ENCODE measurements at regions of chr16 and their contacts with region 1.

Region 1: GRCh38 chr16:56700195-56700594 is 17.9 kb downstream of the MT1X start:
- DNase-seq: no peak
- H3K4me3 ChIP-seq: no peak overlapping the region
- H3K27ac ChIP-seq: no peak overlapping the region
- H3K4me1 ChIP-seq: no peaks in the 10 kb centered on the region
- H3K27me3 ChIP-seq: no peaks in the 10 kb centered on the region
- CTCF ChIP-seq: no peak
- POLR2A ChIP-seq: no peak

Region 2: DNA sequence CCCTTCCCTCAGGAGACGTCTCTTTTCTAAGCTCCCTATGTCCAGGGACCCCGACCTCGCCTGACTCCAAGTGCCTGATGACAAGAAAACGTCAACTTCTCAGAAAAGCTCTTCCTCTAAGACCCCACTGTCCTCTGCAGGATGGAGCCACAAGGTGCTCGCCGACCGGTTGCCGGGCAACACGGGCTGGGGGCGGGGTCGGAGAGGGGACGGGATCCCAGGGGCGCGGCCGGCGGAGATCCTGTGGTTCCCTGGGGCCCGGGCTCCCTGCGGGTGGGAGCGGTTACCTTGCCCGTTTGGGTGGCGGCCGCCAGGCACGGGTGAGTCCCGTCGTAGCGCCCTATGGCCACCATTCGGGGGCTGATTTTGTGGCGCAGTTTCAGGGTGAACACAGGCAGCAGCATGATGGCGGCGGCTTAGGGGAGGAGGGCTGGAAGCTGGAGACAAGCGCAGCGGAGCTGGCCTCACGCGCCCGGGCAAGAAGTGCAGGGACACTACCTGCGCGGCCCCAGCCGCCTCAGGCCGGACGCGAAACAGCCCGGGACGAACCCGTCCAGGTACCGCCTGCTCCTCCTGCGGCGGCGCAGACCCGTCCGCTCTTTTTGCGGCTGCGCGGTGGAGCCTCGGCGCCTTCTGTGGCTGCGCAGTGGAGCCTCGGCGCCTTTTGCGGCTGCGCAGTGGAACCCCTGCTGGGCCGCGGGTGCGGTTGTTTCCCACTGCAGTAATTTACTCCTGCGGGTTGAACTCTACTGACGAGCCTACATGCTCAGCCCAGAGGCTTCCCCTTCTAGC is 180.5 kb before region 1 on chr16 and contains the start of gene BBS2:
- intact Hi-C with region 1: loop called (anchors 5 kb)
- DNase-seq: peak; percentile 92 to 93
- H3K4me3 ChIP-seq: peak within 1 kb of the TSS; percentile 78 to 89 (median 86)
- H3K27ac ChIP-seq: peak within 1 kb of the TSS; percentile 86 to 89 (median 89)
- H3K4me1 ChIP-seq: peaks cover 16 to 30% of the 10 kb centered on the region in 2 donors
- H3K27me3 ChIP-seq: no peaks in the 10 kb centered on the region
- CTCF ChIP-seq: peak in 4 of 6 experiments; percentile 2 to 26 (median 10)
- POLR2A ChIP-seq: peak in 1 of 2 donors; percentile 89
- total RNA-seq, gene BBS2: 55.1 to 98.6 (median 57.4) TPM

Region 3: GRCh38 chr16:56576585-56577293 is 123.5 kb before region 1 on chr16:
- intact Hi-C with region 1: loop called (anchors 5 kb)
- DNase-seq: peak; percentile 76 to 84
- H3K4me3 ChIP-seq: no peak overlapping the region
- H3K27ac ChIP-seq: no peak overlapping the region
- H3K4me1 ChIP-seq: no peaks in the 10 kb centered on the region
- H3K27me3 ChIP-seq: no peaks in the 10 kb centered on the region
- CTCF ChIP-seq: peak; percentile 49 to 94 (median 78)
- POLR2A ChIP-seq: no peak

Region 4: DNA sequence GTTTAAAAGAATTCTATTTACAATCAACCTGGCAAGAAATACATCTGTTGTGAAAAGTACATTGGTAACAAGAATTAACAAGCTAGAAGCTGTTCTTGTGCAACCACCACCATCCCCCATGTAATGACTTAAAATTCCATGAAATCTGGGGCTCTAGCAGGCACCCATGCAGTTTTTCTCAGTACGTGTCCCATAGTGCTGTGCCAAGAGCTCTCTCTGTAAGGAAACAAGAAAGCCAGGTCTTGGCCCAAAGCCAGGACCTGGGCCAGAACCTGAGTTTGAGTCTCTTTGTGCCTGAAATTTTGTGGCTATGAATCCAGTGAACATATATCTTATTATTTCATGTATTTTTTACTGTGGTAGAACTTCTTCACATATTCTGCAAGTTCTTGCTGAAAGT is 76.4 kb after region 1 on chr16:
- intact Hi-C with region 1: no loop called
- DNase-seq: peak; percentile 81 to 87
- H3K4me3 ChIP-seq: no peak overlapping the region
- H3K27ac ChIP-seq: peak overlapping the region in 2 of 3 donors; percentile 0 to 30
- H3K4me1 ChIP-seq: peaks cover 17% of the 10 kb centered on the region in 2 donors
- H3K27me3 ChIP-seq: no peaks in the 10 kb centered on the region
- CTCF ChIP-seq: no peak
- POLR2A ChIP-seq: no peak